ENCODE measurements at regions of chr7 and their contacts with region 1.

Region 1: GRCh38 chr7:2046581-2047565 is 185.9 kb downstream of the MAD1L1 start:
- DNase-seq: no peak
- ATAC-seq: no peak
- H3K4me3 ChIP-seq: no peak overlapping the region
- H3K4me3 Mint-ChIP-seq: no peak overlapping the region
- H3K27ac ChIP-seq: no peak overlapping the region
- H3K27ac Mint-ChIP-seq: no peak overlapping the region
- H3K4me1 ChIP-seq: peaks cover 24% of the 10 kb centered on the region
- H3K4me1 Mint-ChIP-seq: peaks cover 22% of the 10 kb centered on the region
- H3K27me3 ChIP-seq: no peaks in the 10 kb centered on the region
- H3K27me3 Mint-ChIP-seq: no peaks in the 10 kb centered on the region
- CTCF ChIP-seq: no peak

Region 2: GRCh38 chr7:1675671-1676549 is 371.0 kb before region 1 on chr7:
- CTCF ChIA-PET with region 1: no interaction called
- POLR2A ChIA-PET with region 1: no interaction called
- intact Hi-C with region 1: no loop called
- DNase-seq: peak in 1 of 9 experiments; percentile 44
- ATAC-seq: no peak
- H3K4me3 ChIP-seq: no peak overlapping the region
- H3K4me3 Mint-ChIP-seq: no peak overlapping the region
- H3K27ac ChIP-seq: no peak overlapping the region
- H3K27ac Mint-ChIP-seq: no peak overlapping the region
- H3K4me1 ChIP-seq: no peaks in the 10 kb centered on the region
- H3K4me1 Mint-ChIP-seq: no peaks in the 10 kb centered on the region
- H3K27me3 ChIP-seq: peaks cover 4 to 16% of the 10 kb centered on the region in 2 experiments
- H3K27me3 Mint-ChIP-seq: peaks cover 22% of the 10 kb centered on the region
- CTCF ChIP-seq: no peak

Region 3: DNA sequence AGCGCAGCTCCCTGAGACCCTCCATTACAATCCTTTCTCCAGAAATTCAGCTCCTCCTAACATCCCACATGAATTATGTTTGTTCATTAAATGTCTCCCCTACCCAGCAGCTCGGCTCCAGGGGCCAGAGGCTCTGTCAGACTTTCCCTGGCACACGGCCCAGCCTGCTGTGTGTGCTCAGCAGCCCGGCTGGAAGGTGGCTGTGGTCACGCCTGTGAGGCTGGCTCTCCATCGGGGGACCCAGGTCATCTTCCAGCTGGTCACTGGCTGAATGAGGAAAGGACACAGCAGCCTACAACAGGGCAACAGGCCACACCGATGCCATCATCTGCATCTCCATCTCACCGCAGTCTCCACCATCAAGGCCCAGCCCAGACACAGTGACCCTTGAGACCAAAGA is 33.9 kb before region 1 on chr7:
- CTCF ChIA-PET with region 1: interaction called, 3 read pairs
- POLR2A ChIA-PET with region 1: no interaction called
- intact Hi-C with region 1: loop called in 1 of 2 experiments (anchors 5 kb)
- DNase-seq: no peak
- ATAC-seq: no peak
- H3K4me3 ChIP-seq: no peak overlapping the region
- H3K4me3 Mint-ChIP-seq: no peak overlapping the region
- H3K27ac ChIP-seq: no peak overlapping the region
- H3K27ac Mint-ChIP-seq: peak overlapping the region; percentile 20
- H3K4me1 ChIP-seq: no peaks in the 10 kb centered on the region
- H3K4me1 Mint-ChIP-seq: no peaks in the 10 kb centered on the region
- H3K27me3 ChIP-seq: no peaks in the 10 kb centered on the region
- H3K27me3 Mint-ChIP-seq: no peaks in the 10 kb centered on the region
- CTCF ChIP-seq: no peak

Region 4: GRCh38 chr7:2072042-2072441 is 25.2 kb after region 1 on chr7:
- CTCF ChIA-PET with region 1: no interaction called
- POLR2A ChIA-PET with region 1: no interaction called
- intact Hi-C with region 1: no loop called
- DNase-seq: peak in 2 of 9 experiments; percentile 18 to 51
- ATAC-seq: peak; percentile 81
- H3K4me3 ChIP-seq: no peak overlapping the region
- H3K4me3 Mint-ChIP-seq: peak overlapping the region; percentile 22
- H3K27ac ChIP-seq: no peak overlapping the region
- H3K27ac Mint-ChIP-seq: peak overlapping the region; percentile 64
- H3K4me1 ChIP-seq: peaks cover 13% of the 10 kb centered on the region
- H3K4me1 Mint-ChIP-seq: peaks cover 15% of the 10 kb centered on the region
- H3K27me3 ChIP-seq: no peaks in the 10 kb centered on the region
- H3K27me3 Mint-ChIP-seq: no peaks in the 10 kb centered on the region
- CTCF ChIP-seq: no peak

Measured in CD8-positive, alpha-beta T cell (primary cell).